Astrocyte of the cerebellum (primary cell): ENCODE measurements at regions of chr3 and their contacts with region 1.

Region 1: GRCh38 chr3:140276703-140277102 is 341.7 kb downstream of the CLSTN2 start:
- DNase-seq: no peak
- H3K4me3 ChIP-seq: no peak overlapping the region
- CTCF ChIP-seq: peak; percentile 50

Region 2: GRCh38 chr3:140332131-140332530 is 55.4 kb after region 1 on chr3:
- in situ Hi-C with region 1: loop called (anchors 10 kb)
- DNase-seq: no peak
- H3K4me3 ChIP-seq: no peak overlapping the region
- CTCF ChIP-seq: no peak